ENCODE measurements at regions of chr3 and their contacts with region 1.

Region 1: DNA sequence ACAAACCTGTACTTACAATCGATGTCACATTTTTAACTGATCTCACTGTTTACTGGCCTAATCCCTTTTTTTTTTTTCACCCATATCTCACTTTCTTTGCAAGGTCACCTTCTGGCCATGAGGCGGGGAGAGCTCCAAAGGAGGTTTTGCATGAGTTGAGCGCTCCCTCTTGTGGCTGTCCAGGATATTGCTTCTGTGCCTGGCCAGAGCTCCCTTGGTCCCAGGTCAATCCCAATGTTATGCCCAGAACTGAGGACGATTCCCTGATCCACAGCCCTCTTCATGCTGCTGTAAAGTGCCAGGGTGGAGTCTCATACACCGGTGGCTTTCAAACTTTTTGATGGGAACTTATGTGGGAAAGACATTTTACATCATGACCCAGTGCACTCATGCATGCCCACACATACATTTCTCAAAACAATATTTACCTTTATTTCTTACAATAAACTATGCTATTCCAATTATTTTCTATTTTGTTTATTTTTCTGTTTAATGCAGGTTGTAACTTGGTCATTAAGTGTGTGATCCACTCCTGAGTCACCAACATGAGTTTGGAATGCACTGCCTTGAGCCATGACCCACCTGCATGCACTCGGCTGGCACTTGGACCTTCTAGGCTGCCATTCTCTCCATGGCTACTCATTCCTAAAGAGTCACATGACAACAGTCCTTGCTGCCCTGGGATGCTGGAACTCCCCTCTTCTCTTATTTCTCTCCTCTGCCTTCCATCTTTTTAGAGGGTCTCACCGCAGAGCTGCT is 9.6 kb upstream of the SST start:
- DNase-seq: peak; percentile 90
- H3K4me3 Mint-ChIP-seq: no peak overlapping the region
- H3K27ac Mint-ChIP-seq: peak overlapping the region; percentile 25
- H3K4me1 Mint-ChIP-seq: peaks cover 15% of the 10 kb centered on the region
- H3K27me3 Mint-ChIP-seq: peaks cover 62% of the 10 kb centered on the region
- CTCF ChIP-seq: peak; percentile 98

Region 2: GRCh38 chr3:186849374-186849975 is 830.3 kb before region 1 on chr3:
- CTCF ChIA-PET with region 1: interaction called, 8 read pairs
- intact Hi-C with region 1: loop called (anchors 10 kb)
- DNase-seq: no peak
- H3K4me3 Mint-ChIP-seq: no peak overlapping the region
- H3K27ac Mint-ChIP-seq: no peak overlapping the region
- H3K4me1 Mint-ChIP-seq: no peaks in the 10 kb centered on the region
- H3K27me3 Mint-ChIP-seq: peaks cover 72% of the 10 kb centered on the region
- CTCF ChIP-seq: no peak

Region 3: GRCh38 chr3:187164885-187165543 is 514.8 kb before region 1 on chr3:
- CTCF ChIA-PET with region 1: interaction called, 10 read pairs
- intact Hi-C with region 1: no loop called
- DNase-seq: peak; percentile 65
- H3K4me3 Mint-ChIP-seq: no peak overlapping the region
- H3K27ac Mint-ChIP-seq: no peak overlapping the region
- H3K4me1 Mint-ChIP-seq: peaks cover 23% of the 10 kb centered on the region
- H3K27me3 Mint-ChIP-seq: peaks cover 26% of the 10 kb centered on the region
- CTCF ChIP-seq: peak; percentile 65

Region 4: DNA sequence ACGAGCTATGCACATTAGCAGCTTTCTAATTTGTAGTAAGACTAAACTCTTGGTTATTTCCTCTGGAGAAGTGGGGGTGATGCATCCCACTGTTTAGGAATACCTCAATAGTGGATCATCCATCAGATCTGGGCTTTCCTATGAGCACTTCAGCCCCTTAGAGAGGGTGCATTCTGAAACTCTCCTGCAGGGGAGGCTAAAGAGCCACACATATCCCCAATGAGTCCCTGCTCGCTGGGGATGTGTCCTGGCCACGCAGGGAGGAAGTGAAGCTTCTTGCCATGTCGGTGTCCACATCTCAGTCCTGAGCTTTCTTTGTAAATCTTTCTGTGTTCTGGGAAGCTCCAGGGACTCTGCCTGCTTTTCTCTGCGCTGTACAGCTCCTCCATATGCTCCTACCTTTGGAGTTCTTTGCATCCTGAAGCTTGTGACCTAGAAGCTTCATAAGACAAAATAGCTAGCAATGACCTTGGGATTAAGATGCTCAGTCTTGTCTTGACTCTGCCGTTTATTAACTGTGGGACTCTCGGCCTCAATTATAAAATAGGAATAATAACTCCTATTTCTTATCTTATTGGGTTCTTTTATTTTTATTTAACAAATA is 360.0 kb before region 1 on chr3:
- CTCF ChIA-PET with region 1: interaction called, 395 read pairs
- intact Hi-C with region 1: loop called (anchors 1 kb)
- DNase-seq: peak; percentile 84
- H3K4me3 Mint-ChIP-seq: peak overlapping the region; percentile 47
- H3K27ac Mint-ChIP-seq: no peak overlapping the region
- H3K4me1 Mint-ChIP-seq: peaks cover 8% of the 10 kb centered on the region
- H3K27me3 Mint-ChIP-seq: peaks cover 33% of the 10 kb centered on the region
- CTCF ChIP-seq: peak; percentile 97

Region 5: GRCh38 chr3:187342255-187342654 is 337.6 kb before region 1 on chr3:
- CTCF ChIA-PET with region 1: no interaction called
- intact Hi-C with region 1: no loop called
- DNase-seq: no peak
- H3K4me3 Mint-ChIP-seq: no peak overlapping the region
- H3K27ac Mint-ChIP-seq: no peak overlapping the region
- H3K4me1 Mint-ChIP-seq: no peaks in the 10 kb centered on the region
- H3K27me3 Mint-ChIP-seq: no peaks in the 10 kb centered on the region
- CTCF ChIP-seq: no peak

Region 6: DNA sequence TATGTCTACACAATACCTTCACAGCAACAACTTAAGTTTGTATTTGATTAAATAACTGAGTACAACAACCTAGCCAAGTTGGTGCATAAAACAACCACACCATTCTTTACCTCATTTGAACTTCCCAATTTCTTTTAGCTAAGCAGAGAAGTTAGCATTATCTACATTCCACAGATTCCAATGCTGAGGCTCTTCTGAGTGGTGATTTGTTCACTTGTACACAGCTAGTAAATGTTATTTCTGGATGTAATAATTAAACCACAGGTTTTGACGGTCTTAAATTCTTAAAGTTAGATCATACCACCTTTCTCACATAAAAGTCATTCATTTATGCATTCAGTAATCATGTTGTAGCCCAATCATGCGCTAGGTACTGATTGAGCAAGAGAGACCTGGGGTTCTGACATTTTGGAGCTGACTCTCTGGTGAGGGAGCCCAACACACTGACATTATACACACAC is 112.1 kb before region 1 on chr3:
- CTCF ChIA-PET with region 1: interaction called, 4 read pairs
- intact Hi-C with region 1: loop called (anchors 5 kb)
- DNase-seq: peak; percentile 26
- H3K4me3 Mint-ChIP-seq: peak overlapping the region; percentile 11
- H3K27ac Mint-ChIP-seq: peak overlapping the region; percentile 35
- H3K4me1 Mint-ChIP-seq: peaks cover 35% of the 10 kb centered on the region
- H3K27me3 Mint-ChIP-seq: no peaks in the 10 kb centered on the region
- CTCF ChIP-seq: no peak

Region 7: DNA sequence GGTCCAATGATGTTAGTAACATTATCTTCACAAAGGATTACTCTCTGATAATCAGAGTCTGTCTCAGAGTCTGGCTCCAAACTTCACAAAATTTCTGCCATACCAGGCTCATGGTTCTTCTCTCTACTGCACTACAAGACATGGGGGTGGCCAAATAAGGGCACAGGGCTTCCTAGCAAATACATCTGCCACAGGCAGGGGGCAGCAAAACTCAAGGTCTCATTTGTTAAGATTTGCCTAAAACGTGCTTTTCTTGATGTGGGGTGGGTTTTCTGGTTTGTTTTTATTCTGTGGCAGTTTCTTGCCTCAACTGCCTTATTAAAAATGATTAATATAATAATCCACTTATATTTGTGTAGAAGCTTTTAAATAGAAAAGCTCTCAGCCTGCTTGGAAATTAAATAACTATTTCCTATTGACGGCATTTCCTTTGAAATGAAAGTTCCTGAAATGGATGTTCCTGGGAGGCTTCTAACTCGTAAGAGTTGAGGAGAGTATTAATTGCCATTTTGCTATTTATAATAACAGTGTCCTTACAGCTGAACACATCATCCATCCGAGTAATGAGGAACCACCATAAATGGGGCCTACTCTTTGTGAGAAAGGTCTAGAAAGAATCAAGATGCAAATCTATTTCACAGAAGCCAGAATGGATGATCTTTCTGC is 63.4 kb before region 1 on chr3:
- CTCF ChIA-PET with region 1: interaction called, 39 read pairs
- intact Hi-C with region 1: loop called (anchors 1 kb)
- DNase-seq: peak; percentile 79
- H3K4me3 Mint-ChIP-seq: no peak overlapping the region
- H3K27ac Mint-ChIP-seq: no peak overlapping the region
- H3K4me1 Mint-ChIP-seq: no peaks in the 10 kb centered on the region
- H3K27me3 Mint-ChIP-seq: no peaks in the 10 kb centered on the region
- CTCF ChIP-seq: peak; percentile 92

Region 8: DNA sequence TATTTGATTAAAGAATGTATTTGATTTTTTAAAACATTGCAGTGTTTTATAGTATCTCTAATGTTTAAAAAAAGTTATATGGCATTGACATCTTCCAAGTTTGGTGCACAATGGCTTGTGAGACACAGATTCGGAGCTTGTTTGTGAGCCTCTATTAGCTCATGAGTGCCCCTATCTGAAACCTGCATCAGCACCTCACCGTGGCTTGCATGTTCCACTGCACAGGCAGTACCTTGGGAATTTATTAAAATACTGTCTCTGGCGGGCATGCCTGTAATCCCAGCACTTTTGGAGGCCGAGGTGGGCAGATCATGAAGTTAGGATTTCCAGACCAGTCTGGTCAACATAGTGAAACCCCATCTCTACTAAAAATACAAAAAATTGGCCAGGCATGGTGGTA is 29.3 kb after region 1 on chr3:
- CTCF ChIA-PET with region 1: interaction called, 17 read pairs
- intact Hi-C with region 1: loop called (anchors 1 kb)
- DNase-seq: no peak
- H3K4me3 Mint-ChIP-seq: no peak overlapping the region
- H3K27ac Mint-ChIP-seq: no peak overlapping the region
- H3K4me1 Mint-ChIP-seq: peaks cover 4% of the 10 kb centered on the region
- H3K27me3 Mint-ChIP-seq: no peaks in the 10 kb centered on the region
- CTCF ChIP-seq: peak; percentile 11

Region 9: DNA sequence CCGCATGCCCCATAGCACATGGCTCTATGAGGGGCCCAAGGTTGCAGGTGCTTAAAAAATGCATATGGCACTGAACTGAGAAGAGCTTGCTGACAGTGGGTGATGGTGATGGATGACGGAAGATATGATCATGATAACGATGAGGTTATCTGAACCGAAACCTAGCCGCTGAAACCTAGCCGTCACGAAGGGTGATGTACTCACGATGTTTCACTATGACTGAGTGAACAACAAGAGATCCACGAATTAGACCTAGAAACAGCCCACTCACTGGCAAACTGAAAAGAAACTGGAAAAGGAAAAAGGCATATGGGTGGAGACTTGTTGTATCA is 123.1 kb after region 1 on chr3:
- CTCF ChIA-PET with region 1: no interaction called
- intact Hi-C with region 1: no loop called
- DNase-seq: no peak
- H3K4me3 Mint-ChIP-seq: no peak overlapping the region
- H3K27ac Mint-ChIP-seq: no peak overlapping the region
- H3K4me1 Mint-ChIP-seq: no peaks in the 10 kb centered on the region
- H3K27me3 Mint-ChIP-seq: peaks cover 8% of the 10 kb centered on the region
- CTCF ChIP-seq: no peak